ENCODE measurements at regions of chr6 and their contacts with region 1.

Region 1: DNA sequence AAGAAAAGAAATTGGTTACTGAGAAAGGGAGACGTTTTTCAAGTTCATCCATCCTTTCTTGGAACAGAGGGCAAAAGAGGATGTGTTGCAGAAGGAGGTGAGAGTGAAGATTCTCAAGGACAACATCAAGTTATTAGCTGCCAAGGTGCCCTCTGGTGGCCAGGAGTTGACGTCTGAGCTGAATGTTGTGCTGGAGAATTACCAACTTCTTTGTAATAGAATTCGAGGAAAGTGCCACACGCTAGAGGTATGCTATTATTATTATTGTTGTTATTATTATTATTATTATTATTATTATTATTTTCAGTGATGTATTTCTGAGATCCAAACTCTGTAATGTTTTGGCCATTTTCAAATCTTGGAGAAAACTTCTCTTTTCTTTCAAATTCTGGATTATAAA is 197.0 kb downstream of the UTRN start:
- DNase-seq: peak; percentile 76
- H3K4me3 Mint-ChIP-seq: no peak overlapping the region
- H3K27ac Mint-ChIP-seq: no peak overlapping the region
- H3K4me1 Mint-ChIP-seq: peaks cover 18% of the 10 kb centered on the region
- H3K27me3 Mint-ChIP-seq: no peaks in the 10 kb centered on the region

Region 2: DNA sequence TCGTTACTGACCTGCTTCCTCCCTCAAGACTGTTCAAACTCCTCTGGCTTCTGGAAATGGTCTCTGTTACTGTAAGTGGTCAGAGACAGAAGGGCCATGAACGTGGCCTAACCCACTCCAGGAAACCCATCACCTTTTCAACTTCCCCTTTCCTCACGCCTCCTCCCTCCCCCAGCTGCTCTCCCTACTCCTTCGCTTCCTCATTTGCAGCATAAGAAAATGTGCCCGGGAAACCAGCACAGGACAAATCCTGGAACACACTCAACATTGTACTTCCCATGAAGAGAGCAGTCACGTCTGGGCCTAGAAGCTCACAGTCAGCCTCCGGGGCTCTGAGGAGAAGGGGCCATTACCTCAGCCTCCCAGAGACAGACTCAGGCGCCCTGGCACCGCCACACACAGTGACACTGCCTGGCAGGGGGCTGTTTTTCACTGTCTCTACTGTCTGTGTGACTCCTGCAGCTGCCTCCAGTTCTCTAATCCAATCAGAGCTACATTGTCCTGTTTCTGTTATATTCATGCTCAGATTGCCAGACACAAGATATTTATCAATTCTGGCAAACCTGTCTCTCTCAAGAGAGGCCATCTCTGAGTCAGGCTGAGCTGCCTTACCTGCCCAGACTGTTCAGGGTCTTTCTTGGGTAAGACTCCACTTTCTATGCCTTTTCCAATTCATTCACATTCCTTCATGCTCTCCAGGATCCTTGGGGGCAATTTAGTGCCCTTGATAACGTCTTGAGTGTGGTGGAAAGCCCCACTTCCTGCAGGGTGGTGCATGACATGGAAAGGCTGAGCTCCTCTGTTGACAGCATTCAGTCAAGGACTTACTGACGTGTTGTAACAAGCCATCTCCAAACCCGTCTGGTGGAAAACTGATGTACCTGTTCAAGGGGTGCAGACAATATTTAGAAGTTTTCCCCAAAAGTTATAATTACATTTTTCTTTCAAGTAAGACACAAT is 1779.4 kb before region 1 on chr6:
- CTCF ChIA-PET with region 1: no interaction called
- POLR2A ChIA-PET with region 1: no interaction called
- DNase-seq: no peak
- H3K4me3 Mint-ChIP-seq: no peak overlapping the region
- H3K27ac Mint-ChIP-seq: no peak overlapping the region
- H3K4me1 Mint-ChIP-seq: peaks cover 5% of the 10 kb centered on the region
- H3K27me3 Mint-ChIP-seq: no peaks in the 10 kb centered on the region

Region 3: GRCh38 chr6:144215932-144216667 is 266.0 kb before region 1 on chr6:
- CTCF ChIA-PET with region 1: interaction called, 17 read pairs
- POLR2A ChIA-PET with region 1: no interaction called
- DNase-seq: peak; percentile 93
- H3K4me3 Mint-ChIP-seq: peak overlapping the region; percentile 83
- H3K27ac Mint-ChIP-seq: peak overlapping the region; percentile 97
- H3K4me1 Mint-ChIP-seq: peaks cover 38% of the 10 kb centered on the region
- H3K27me3 Mint-ChIP-seq: peaks cover 1% of the 10 kb centered on the region

Region 4: GRCh38 chr6:144284783-144285547 is 197.2 kb before region 1 on chr6 and contains the start of gene UTRN:
- CTCF ChIA-PET with region 1: interaction called, 13 read pairs
- POLR2A ChIA-PET with region 1: no interaction called
- DNase-seq: peak; percentile 54
- H3K4me3 Mint-ChIP-seq: peak within 1 kb of the TSS; percentile 89
- H3K27ac Mint-ChIP-seq: peak within 1 kb of the TSS; percentile 71
- H3K4me1 Mint-ChIP-seq: peaks cover 21% of the 10 kb centered on the region
- H3K27me3 Mint-ChIP-seq: peaks cover 24% of the 10 kb centered on the region
- total RNA-seq, gene UTRN: 140 to 146 TPM

Region 5: DNA sequence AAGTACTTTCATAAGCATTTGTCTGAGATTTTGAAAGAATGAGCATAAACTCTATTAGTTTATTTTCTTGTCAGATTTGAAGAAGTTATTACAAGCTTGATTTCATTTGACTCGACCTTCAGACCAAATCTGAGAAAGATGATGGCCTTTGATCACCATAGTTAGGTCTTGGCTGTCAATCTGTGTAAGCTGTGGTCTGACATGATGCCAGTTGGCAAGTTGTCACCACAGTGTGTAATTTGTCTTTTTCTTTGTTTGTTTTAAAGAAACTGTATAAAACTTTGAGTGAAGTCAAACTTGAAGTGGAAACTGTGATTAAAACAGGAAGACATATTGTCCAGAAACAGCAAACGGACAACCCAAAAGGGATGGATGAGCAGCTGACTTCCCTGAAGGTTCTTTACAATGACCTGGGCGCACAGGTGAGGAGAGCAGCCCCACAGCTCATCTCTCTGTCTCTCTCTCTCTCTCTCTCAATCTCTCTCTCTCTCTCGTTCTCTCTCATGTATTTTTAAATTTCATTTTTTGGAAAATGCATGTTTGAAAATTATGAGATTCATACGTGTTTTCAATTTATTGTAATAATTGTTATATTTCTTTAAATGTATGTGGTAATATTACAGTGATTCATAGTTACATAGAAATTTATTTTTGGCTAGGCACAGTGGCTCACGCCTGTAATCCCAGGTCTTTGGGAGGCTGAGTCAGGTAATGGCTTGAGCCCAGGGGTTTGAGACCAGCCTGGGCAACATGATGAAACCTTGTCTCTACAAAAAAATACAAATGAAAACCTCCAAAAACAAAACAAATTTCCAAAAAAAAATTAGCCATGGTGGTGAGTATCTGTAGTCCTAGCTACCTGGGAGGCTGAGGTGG is 11.1 kb after region 1 on chr6:
- CTCF ChIA-PET with region 1: interaction called, 20 read pairs
- POLR2A ChIA-PET with region 1: no interaction called
- DNase-seq: no peak
- H3K4me3 Mint-ChIP-seq: no peak overlapping the region
- H3K27ac Mint-ChIP-seq: no peak overlapping the region
- H3K4me1 Mint-ChIP-seq: peaks cover 5% of the 10 kb centered on the region
- H3K27me3 Mint-ChIP-seq: no peaks in the 10 kb centered on the region